ENCODE measurements at regions of chr1 and their contacts with region 1.

Region 1: GRCh38 chr1:151340870-151341754 is 5.9 kb downstream of the RFX5 start:
- DNase-seq: peak in 8 of 9 experiments; percentile 24 to 86 (median 54)
- ATAC-seq: peak; percentile 92
- H3K4me3 ChIP-seq: no peak overlapping the region
- H3K4me3 Mint-ChIP-seq: no peak overlapping the region
- H3K27ac ChIP-seq: peak overlapping the region in 1 of 2 experiments; percentile 42
- H3K27ac Mint-ChIP-seq: peak overlapping the region; percentile 50
- H3K4me1 ChIP-seq: peaks cover 6% of the 10 kb centered on the region
- H3K4me1 Mint-ChIP-seq: peaks cover 26% of the 10 kb centered on the region
- H3K27me3 ChIP-seq: no peaks in the 10 kb centered on the region
- H3K27me3 Mint-ChIP-seq: no peaks in the 10 kb centered on the region
- CTCF ChIP-seq: peak; percentile 81

Region 2: DNA sequence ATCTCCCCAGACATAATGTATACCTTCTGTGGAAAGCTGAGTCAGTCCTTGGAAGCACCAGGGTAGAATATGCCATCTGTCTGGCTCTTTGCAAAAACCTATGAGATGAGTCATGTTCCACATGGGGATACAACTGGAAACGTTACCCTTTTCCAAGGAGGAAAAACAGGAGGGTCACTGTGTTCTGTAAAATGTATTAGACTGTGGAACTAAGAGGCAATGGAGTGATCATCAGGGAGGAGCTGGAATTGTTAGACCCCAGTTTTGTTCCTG is 102.7 kb before region 1 on chr1:
- CTCF ChIA-PET with region 1: interaction called, 10 read pairs
- POLR2A ChIA-PET with region 1: no interaction called
- intact Hi-C with region 1: no loop called
- DNase-seq: no peak
- ATAC-seq: no peak
- H3K4me3 ChIP-seq: no peak overlapping the region
- H3K4me3 Mint-ChIP-seq: no peak overlapping the region
- H3K27ac ChIP-seq: no peak overlapping the region
- H3K27ac Mint-ChIP-seq: no peak overlapping the region
- H3K4me1 ChIP-seq: no peaks in the 10 kb centered on the region
- H3K4me1 Mint-ChIP-seq: no peaks in the 10 kb centered on the region
- H3K27me3 ChIP-seq: no peaks in the 10 kb centered on the region
- H3K27me3 Mint-ChIP-seq: no peaks in the 10 kb centered on the region
- CTCF ChIP-seq: no peak

Region 3: GRCh38 chr1:151311589-151312331 is 29.4 kb before region 1 on chr1:
- CTCF ChIA-PET with region 1: interaction called, 38 read pairs
- POLR2A ChIA-PET with region 1: no interaction called
- intact Hi-C with region 1: no loop called
- DNase-seq: peak in 7 of 9 experiments; percentile 45 to 75 (median 62)
- ATAC-seq: peak; percentile 98
- H3K4me3 ChIP-seq: no peak overlapping the region
- H3K4me3 Mint-ChIP-seq: no peak overlapping the region
- H3K27ac ChIP-seq: peak overlapping the region in 1 of 2 experiments; percentile 19
- H3K27ac Mint-ChIP-seq: peak overlapping the region; percentile 79
- H3K4me1 ChIP-seq: peaks cover 17% of the 10 kb centered on the region
- H3K4me1 Mint-ChIP-seq: peaks cover 49% of the 10 kb centered on the region
- H3K27me3 ChIP-seq: no peaks in the 10 kb centered on the region
- H3K27me3 Mint-ChIP-seq: no peaks in the 10 kb centered on the region
- CTCF ChIP-seq: no peak

Region 4: GRCh38 chr1:151352006-151352689 is 11.0 kb after region 1 on chr1:
- CTCF ChIA-PET with region 1: interaction called, 55 read pairs
- POLR2A ChIA-PET with region 1: interaction called, 3 read pairs
- intact Hi-C with region 1: no loop called
- DNase-seq: no peak
- ATAC-seq: no peak
- H3K4me3 ChIP-seq: no peak overlapping the region
- H3K4me3 Mint-ChIP-seq: no peak overlapping the region
- H3K27ac ChIP-seq: no peak overlapping the region
- H3K27ac Mint-ChIP-seq: no peak overlapping the region
- H3K4me1 ChIP-seq: peaks cover 6% of the 10 kb centered on the region
- H3K4me1 Mint-ChIP-seq: peaks cover 11% of the 10 kb centered on the region
- H3K27me3 ChIP-seq: no peaks in the 10 kb centered on the region
- H3K27me3 Mint-ChIP-seq: no peaks in the 10 kb centered on the region
- CTCF ChIP-seq: no peak